H1 (cell line): ENCODE measurements at regions of chr7 and their contacts with region 1.

Region 1: GRCh38 chr7:51344406-51345138 is 28.0 kb upstream of the COBL start:
- DNase-seq: no peak
- H3K4me3 ChIP-seq: no peak overlapping the region
- H3K27ac ChIP-seq: no peak overlapping the region
- H3K4me1 ChIP-seq: no peaks in the 10 kb centered on the region
- H3K27me3 ChIP-seq: no peaks in the 10 kb centered on the region
- CTCF ChIP-seq: no peak
- EP300 ChIP-seq: no peak
- POLR2A ChIP-seq: no peak
- RAD21 ChIP-seq: no peak

Region 2: DNA sequence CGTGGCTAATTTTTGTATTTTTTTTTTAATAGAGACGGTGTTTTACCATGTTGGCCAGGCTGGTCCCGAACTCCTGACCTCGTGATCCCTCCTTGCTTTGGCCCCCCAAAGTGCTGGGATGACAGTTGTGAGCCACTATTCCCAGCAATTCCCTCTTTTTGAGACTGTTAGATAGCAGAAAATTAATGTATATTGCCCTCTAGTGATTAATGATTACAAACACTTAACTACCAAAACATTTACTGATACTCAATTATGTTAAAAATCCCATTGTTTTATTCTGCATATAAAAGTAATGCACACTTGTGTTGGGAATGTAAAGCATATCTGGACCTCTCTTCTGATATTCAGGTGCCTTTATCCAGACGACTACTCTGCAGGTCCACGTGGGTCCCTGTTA is 13.2 kb after region 1 on chr7:
- CTCF ChIA-PET with region 1: interaction called, 24 read pairs
- POLR2A ChIA-PET with region 1: interaction called, 3 read pairs
- DNase-seq: no peak
- H3K4me3 ChIP-seq: no peak overlapping the region
- H3K27ac ChIP-seq: no peak overlapping the region
- H3K4me1 ChIP-seq: peaks cover 0 to 5% (median 0%) of the 10 kb centered on the region in 4 experiments; a peak in 4 of 7 replicates
- H3K27me3 ChIP-seq: no peaks in the 10 kb centered on the region
- CTCF ChIP-seq: no peak
- EP300 ChIP-seq: no peak
- POLR2A ChIP-seq: no peak
- RAD21 ChIP-seq: no peak